PC-9 (cell line): ENCODE measurements at regions of chrX and their contacts with region 1.

Region 1: GRCh38 chrX:94454159-94454558 is 780.2 kb downstream of the FAM133A start:
- DNase-seq: no peak
- H3K4me3 ChIP-seq: no peak overlapping the region
- H3K27ac ChIP-seq: no peak overlapping the region
- H3K4me1 ChIP-seq: no peaks in the 10 kb centered on the region
- H3K27me3 ChIP-seq: no peaks in the 10 kb centered on the region
- CTCF ChIP-seq: no peak

Region 2: GRCh38 chrX:94361250-94361649 is 92.9 kb before region 1 on chrX:
- CTCF ChIA-PET with region 1: no interaction called
- POLR2A ChIA-PET with region 1: no interaction called
- intact Hi-C with region 1: loop called (anchors 10 kb)
- DNase-seq: no peak
- H3K4me3 ChIP-seq: no peak overlapping the region
- H3K27ac ChIP-seq: no peak overlapping the region
- H3K4me1 ChIP-seq: no peaks in the 10 kb centered on the region
- H3K27me3 ChIP-seq: no peaks in the 10 kb centered on the region
- CTCF ChIP-seq: no peak

Region 3: DNA sequence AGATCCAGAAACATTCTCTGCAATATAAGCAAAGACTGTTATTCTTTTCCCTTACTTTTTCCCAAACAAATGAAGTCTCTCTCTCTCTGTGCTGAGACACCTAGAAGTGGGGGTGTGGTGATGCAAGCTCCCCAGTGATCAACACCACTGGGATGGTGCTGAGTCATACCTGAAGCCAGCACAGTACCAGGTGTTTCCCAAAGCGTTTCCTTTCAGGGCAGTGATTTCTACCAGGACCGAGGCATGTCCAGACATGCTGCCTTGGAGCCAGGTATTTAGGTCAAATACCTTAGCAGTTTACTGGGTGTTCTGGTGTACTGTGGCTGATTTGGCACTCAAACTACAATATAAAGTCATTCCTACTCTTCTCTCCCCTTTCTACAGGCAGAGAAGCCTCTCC is 53.7 kb before region 1 on chrX:
- CTCF ChIA-PET with region 1: no interaction called
- POLR2A ChIA-PET with region 1: no interaction called
- intact Hi-C with region 1: no loop called
- DNase-seq: peak in 1 of 2 experiments; percentile 34
- H3K4me3 ChIP-seq: no peak overlapping the region
- H3K27ac ChIP-seq: no peak overlapping the region
- H3K4me1 ChIP-seq: no peaks in the 10 kb centered on the region
- H3K27me3 ChIP-seq: no peaks in the 10 kb centered on the region
- CTCF ChIP-seq: no peak

Region 4: GRCh38 chrX:95218974-95219373 is 764.8 kb after region 1 on chrX:
- CTCF ChIA-PET with region 1: no interaction called
- POLR2A ChIA-PET with region 1: no interaction called
- intact Hi-C with region 1: no loop called
- DNase-seq: no peak
- H3K4me3 ChIP-seq: no peak overlapping the region
- H3K27ac ChIP-seq: no peak overlapping the region
- H3K4me1 ChIP-seq: no peaks in the 10 kb centered on the region
- H3K27me3 ChIP-seq: no peaks in the 10 kb centered on the region
- CTCF ChIP-seq: no peak